Cardiac septum (tissue), 1 donor: ENCODE measurements at regions of chr22 and their contacts with region 1.

Region 1: DNA sequence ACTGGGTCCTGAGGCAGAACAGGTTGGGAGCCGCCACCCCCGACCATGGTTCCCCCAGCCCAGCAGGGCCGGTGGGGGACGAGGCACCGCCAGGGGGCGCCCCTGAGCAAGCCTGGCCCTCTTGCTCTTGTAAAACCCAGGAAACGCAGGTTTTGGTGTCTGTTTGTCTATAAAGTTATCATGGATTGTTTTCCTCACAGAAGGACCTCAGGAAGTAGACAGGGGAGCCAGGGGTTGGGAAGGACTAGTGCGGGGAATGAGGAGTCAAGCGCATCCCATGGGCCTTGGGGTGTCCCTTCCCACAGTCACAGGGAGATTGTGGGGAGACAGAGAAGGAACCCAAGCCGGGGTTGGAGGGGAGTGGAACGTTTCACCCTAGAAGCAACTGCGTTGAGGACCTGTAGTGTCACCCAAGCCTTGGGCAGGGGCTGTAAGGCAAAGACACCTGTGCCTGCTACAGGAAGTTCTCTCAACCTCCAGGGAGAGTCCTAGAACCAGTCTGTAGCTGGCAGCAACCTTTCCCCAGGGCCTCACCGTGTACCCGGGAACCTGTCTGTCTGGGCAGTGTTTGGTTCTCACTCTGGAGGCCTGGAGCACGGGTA is 26.4 kb downstream of the KCTD17 start:
- DNase-seq: no peak

Region 2: DNA sequence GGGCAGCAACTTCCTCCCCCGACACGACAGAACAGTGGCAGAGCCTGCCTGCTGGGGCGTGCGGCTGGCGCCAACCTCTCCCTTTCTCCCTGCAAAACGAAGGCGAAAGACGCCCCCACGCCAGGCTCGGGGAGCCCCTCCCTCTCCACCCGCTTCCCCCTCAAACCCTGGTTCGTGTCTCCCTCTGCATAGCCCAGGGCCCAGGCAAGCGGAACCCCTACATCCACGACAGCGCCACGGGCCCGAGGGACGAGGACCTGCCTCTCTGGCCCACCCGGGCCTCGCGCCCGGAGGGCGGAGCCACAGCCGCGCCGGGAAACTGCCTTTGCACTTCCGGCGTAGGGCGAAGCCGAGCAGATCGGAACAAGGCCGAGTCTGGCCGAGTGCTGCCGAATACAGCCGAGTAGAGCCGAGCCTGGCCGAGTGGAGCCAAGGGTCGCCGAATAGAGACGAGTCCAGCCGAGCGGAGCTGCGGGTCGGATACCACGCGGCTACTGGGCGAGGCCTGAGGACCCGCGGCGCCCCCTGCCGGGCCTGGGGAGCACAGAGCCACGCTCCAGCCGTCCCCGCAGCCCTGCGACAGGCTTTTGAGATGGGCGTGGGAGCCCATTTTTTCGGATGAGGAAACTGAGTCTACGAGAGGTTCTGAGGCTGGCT is 121.2 kb after region 1 on chr22:
- intact Hi-C with region 1: loop called (anchors 2 kb)
- DNase-seq: peak; percentile 99